ENCODE measurements at regions of chr19 and their contacts with region 1.

Region 1: GRCh38 chr19:55653758-55654539 is 886 bp upstream of the U2AF2 start:
- DNase-seq: peak; percentile 99 to 100 (median 100)
- H3K4me3 ChIP-seq: peak overlapping the region; percentile 74 to 95 (median 87)
- H3K27ac ChIP-seq: peak overlapping the region; percentile 96 to 99
- H3K4me1 ChIP-seq: peaks cover 18 to 46% (median 40%) of the 10 kb centered on the region in 4 experiments
- H3K27me3 ChIP-seq: no peaks in the 10 kb centered on the region

Region 2: GRCh38 chr19:55536951-55537740 is 116.8 kb before region 1 on chr19 and contains the start of gene SBK2:
- CTCF ChIA-PET with region 1: no interaction called
- POLR2A ChIA-PET with region 1: no interaction called
- DNase-seq: peak; percentile 20 to 47 (median 46)
- H3K4me3 ChIP-seq: no peak within 1 kb of the TSS
- H3K27ac ChIP-seq: no peak within 1 kb of the TSS
- H3K4me1 ChIP-seq: no peaks in the 10 kb centered on the region
- H3K27me3 ChIP-seq: no peaks in the 10 kb centered on the region

Region 3: GRCh38 chr19:55670280-55671053 is 16.5 kb after region 1 on chr19:
- CTCF ChIA-PET with region 1: interaction called, 18 read pairs
- POLR2A ChIA-PET with region 1: interaction called, 3 read pairs
- DNase-seq: no peak
- H3K4me3 ChIP-seq: no peak overlapping the region
- H3K27ac ChIP-seq: no peak overlapping the region
- H3K4me1 ChIP-seq: peaks cover 0 to 13% (median 7%) of the 10 kb centered on the region in 4 experiments
- H3K27me3 ChIP-seq: no peaks in the 10 kb centered on the region

Measured in common myeloid progenitor, CD34-positive (primary cell).